Caco-2 (cell line): ENCODE measurements at regions of chr3 and their contacts with region 1.

Region 1: DNA sequence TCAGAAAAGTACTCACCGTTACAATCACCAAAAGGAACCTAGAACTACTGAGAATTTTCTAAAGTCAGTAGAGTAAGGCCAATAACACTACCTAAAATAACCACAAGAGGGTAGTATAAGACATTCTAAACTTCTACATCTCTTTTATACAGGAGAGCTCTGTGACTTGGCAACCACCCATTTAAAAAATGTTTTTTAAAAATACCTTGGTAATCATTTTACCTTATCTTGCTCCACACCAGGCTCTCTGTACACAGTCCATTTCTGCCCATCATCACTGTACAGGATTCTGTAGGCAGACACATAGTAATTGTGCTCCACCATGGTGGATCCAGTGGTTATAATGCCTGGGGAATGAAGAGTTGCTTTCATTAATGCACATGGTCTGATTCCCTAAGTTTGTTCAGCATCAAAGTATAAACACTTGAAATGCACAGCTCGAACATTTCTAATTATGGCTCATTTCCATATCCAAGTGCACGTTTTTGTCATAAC is 54.5 kb downstream of the ST3GAL6 start:
- DNase-seq: peak in 1 of 2 experiments; percentile 22
- H3K4me3 ChIP-seq: no peak overlapping the region
- H3K4me3 Mint-ChIP-seq: no peak overlapping the region
- H3K27ac Mint-ChIP-seq: no peak overlapping the region
- H3K4me1 ChIP-seq: peaks cover 12% of the 10 kb centered on the region
- H3K4me1 Mint-ChIP-seq: peaks cover 13% of the 10 kb centered on the region
- H3K27me3 ChIP-seq: no peaks in the 10 kb centered on the region
- H3K27me3 Mint-ChIP-seq: no peaks in the 10 kb centered on the region
- CTCF ChIP-seq: peak; percentile 42 to 44

Region 2: GRCh38 chr3:98039322-98040024 is 778.1 kb before region 1 on chr3:
- CTCF ChIA-PET with region 1: no interaction called
- POLR2A ChIA-PET with region 1: no interaction called
- intact Hi-C with region 1: loop called (anchors 10 kb)
- DNase-seq: peak; percentile 53 to 70
- H3K4me3 ChIP-seq: 0 out of 2 replicates have a peak overlapping the region, but pooled peaks have one; percentile 20
- H3K4me3 Mint-ChIP-seq: peak overlapping the region; percentile 72
- H3K27ac Mint-ChIP-seq: no peak overlapping the region
- H3K4me1 ChIP-seq: no peaks in the 10 kb centered on the region
- H3K4me1 Mint-ChIP-seq: no peaks in the 10 kb centered on the region
- H3K27me3 ChIP-seq: no peaks in the 10 kb centered on the region
- H3K27me3 Mint-ChIP-seq: peaks cover 3% of the 10 kb centered on the region
- CTCF ChIP-seq: peak; percentile 77 to 92

Region 3: DNA sequence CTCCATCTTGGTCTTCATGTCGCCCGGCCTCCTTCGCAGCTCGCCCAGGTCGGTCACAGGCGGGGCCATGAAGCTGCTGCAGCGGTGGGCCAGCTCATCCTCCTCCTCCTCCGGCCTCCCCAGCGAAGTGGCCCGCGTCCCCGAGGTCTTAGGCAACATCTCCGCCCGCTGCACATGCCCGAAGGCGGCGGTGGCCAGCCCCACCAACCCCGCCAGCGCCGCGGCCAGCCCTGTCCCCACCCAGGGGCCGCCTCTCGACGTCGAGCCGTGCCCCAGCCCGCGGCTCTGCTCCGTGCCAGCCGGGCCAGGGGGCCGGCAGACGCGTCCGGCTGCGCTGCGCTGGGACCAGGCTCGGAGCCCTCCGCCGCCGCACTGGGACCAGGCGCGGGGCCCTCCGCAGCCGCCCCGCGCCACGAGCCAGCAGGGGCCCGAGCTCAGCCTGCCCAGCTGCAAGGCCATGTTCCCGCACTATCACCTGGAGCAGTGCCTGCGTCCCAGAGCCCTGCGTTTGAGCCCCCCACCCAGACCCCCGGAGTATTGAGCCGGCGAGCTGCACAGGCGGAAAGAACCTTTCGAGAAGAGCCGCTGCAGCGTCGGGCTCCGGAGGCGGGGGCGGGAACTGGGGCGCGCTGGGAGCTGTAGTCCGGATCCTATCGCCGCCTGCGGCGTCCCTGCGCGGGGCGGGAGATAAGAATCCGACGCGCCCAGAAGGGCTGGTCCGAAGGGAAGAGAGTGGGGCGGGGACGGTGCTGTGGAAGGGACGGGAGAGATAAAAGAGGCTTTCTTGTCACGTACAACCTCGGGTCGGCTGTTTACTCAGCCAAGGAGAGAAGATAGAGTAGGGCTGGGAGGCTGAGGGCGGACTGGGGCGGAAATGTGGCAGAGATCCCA is 224.3 kb before region 1 on chr3 and contains the start of gene CPOX:
- CTCF ChIA-PET with region 1: interaction called, 4 read pairs
- POLR2A ChIA-PET with region 1: no interaction called
- intact Hi-C with region 1: loop called (anchors 1 kb)
- DNase-seq: peak; percentile 90 to 94
- H3K4me3 ChIP-seq: peak within 1 kb of the TSS; percentile 91
- H3K4me3 Mint-ChIP-seq: peak within 1 kb of the TSS; percentile 97
- H3K27ac Mint-ChIP-seq: peak within 1 kb of the TSS; percentile 55
- H3K4me1 ChIP-seq: peaks cover 13% of the 10 kb centered on the region
- H3K4me1 Mint-ChIP-seq: peaks cover 11% of the 10 kb centered on the region
- H3K27me3 ChIP-seq: no peaks in the 10 kb centered on the region
- H3K27me3 Mint-ChIP-seq: no peaks in the 10 kb centered on the region
- CTCF ChIP-seq: no peak
- total RNA-seq, gene CPOX: 24.2 and 25.0 TPM in 2 replicates

Region 4: GRCh38 chr3:98732286-98733052 is 85.1 kb before region 1 on chr3:
- CTCF ChIA-PET with region 1: interaction called, 8 read pairs
- POLR2A ChIA-PET with region 1: no interaction called
- intact Hi-C with region 1: loop called (anchors 2 kb)
- DNase-seq: peak; percentile 89
- H3K4me3 ChIP-seq: peak overlapping the region; percentile 89
- H3K4me3 Mint-ChIP-seq: peak overlapping the region; percentile 85
- H3K27ac Mint-ChIP-seq: peak overlapping the region; percentile 79
- H3K4me1 ChIP-seq: peaks cover 25% of the 10 kb centered on the region
- H3K4me1 Mint-ChIP-seq: peaks cover 17% of the 10 kb centered on the region
- H3K27me3 ChIP-seq: no peaks in the 10 kb centered on the region
- H3K27me3 Mint-ChIP-seq: no peaks in the 10 kb centered on the region
- CTCF ChIP-seq: no peak

Region 5: DNA sequence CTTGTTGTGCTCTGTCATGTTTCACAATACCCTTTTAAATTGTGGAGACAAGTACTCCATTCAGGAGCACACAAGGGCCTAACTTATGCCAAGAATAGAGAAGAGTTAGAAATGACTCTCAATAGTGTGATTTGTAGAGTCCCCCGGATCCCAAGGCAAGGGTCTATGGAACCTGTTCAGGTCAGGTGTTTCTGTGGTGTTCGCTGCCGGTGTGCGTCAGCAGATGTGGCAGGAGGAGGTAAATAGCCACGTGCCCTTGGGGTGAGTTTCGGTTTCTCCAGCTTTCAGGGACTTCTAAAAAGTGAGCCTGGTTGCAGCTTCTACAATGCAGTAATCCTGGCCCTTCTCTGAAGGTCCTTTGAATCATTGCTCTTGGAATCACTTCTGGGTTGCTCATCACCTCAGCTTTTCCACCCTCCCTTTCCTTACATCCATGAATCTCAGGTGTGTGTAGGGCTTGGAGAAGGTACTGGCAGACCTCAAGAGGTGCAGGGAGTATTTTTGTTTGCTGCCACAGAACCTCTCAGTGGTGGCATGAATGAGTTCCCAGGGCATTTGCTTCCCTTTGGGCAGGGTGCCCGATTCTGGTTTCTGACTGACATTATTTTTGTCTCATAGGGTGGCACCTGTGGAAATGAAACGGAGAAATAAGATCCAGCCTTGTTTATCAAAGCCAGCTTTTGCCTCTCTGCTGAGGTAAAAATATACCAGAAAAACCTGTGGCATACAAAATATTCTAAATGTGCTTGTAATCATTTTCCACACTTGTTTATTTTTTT is 47.1 kb before region 1 on chr3:
- CTCF ChIA-PET with region 1: no interaction called
- POLR2A ChIA-PET with region 1: no interaction called
- intact Hi-C with region 1: no loop called
- DNase-seq: no peak
- H3K4me3 ChIP-seq: no peak overlapping the region
- H3K4me3 Mint-ChIP-seq: no peak overlapping the region
- H3K27ac Mint-ChIP-seq: no peak overlapping the region
- H3K4me1 ChIP-seq: peaks cover 27% of the 10 kb centered on the region
- H3K4me1 Mint-ChIP-seq: peaks cover 8% of the 10 kb centered on the region
- H3K27me3 ChIP-seq: no peaks in the 10 kb centered on the region
- H3K27me3 Mint-ChIP-seq: no peaks in the 10 kb centered on the region
- CTCF ChIP-seq: no peak

Region 6: DNA sequence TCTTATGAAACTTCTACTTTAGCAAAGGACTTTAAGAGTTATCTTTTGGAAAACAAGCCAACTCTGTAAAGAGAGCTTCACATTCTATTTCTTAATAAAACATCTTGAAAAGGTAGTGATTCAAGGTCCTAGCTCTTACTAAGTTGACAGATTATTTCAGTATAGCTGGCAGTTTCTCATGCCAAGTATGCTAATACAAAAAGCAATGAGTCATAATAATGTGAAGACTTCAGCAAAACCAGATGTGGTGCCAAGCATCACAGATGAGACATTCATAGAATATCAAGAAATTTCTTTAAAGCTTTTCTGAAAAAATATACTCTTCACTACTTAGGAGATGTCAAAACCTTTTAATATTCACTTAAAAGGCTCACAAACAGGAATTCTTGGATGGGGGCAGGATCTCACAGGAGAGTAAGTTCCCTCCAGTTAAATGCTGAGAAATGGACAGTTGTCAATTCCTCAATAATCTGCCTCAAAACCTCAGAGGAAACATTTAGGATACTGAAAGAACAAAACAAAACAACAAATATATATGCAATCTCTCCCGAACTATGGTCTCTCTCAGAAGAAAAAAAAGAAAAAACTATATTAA is 38.3 kb after region 1 on chr3:
- CTCF ChIA-PET with region 1: no interaction called
- POLR2A ChIA-PET with region 1: no interaction called
- intact Hi-C with region 1: no loop called
- DNase-seq: no peak
- H3K4me3 ChIP-seq: no peak overlapping the region
- H3K4me3 Mint-ChIP-seq: no peak overlapping the region
- H3K27ac Mint-ChIP-seq: no peak overlapping the region
- H3K4me1 ChIP-seq: no peaks in the 10 kb centered on the region
- H3K4me1 Mint-ChIP-seq: no peaks in the 10 kb centered on the region
- H3K27me3 ChIP-seq: no peaks in the 10 kb centered on the region
- H3K27me3 Mint-ChIP-seq: no peaks in the 10 kb centered on the region
- CTCF ChIP-seq: no peak

Region 7: GRCh38 chr3:98901392-98902350 is 84.1 kb after region 1 on chr3 and contains the start of gene DCBLD2:
- CTCF ChIA-PET with region 1: interaction called, 8 read pairs
- POLR2A ChIA-PET with region 1: interaction called, 3 read pairs
- intact Hi-C with region 1: loop called (anchors 1 kb)
- DNase-seq: peak; percentile 98 to 99
- H3K4me3 ChIP-seq: peak within 1 kb of the TSS; percentile 91
- H3K4me3 Mint-ChIP-seq: peak within 1 kb of the TSS; percentile 96
- H3K27ac Mint-ChIP-seq: peak within 1 kb of the TSS; percentile 81
- H3K4me1 ChIP-seq: peaks cover 17% of the 10 kb centered on the region
- H3K4me1 Mint-ChIP-seq: peaks cover 14% of the 10 kb centered on the region
- H3K27me3 ChIP-seq: no peaks in the 10 kb centered on the region
- H3K27me3 Mint-ChIP-seq: no peaks in the 10 kb centered on the region
- CTCF ChIP-seq: no peak
- total RNA-seq, gene DCBLD2: 53.0 and 58.5 TPM in 2 replicates

Region 8: DNA sequence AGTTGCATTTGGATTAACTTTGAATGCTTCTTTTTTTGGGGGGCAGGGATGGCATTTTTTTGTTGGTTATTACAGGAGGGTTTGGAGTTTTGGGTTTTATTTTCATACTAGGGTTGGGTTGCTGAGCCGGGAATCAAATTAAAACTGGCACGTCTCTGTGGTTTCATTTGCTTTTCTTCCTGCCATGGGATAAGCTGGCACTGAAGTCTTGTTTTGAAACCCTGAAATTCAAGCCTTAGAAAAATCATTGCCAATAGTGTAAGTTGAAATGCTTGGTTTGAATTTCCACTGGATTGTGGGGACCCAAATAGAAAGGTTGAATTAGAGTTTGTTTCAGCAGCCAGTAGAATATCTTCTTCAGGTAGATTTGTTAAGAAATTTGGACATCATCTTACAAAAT is 277.0 kb after region 1 on chr3:
- CTCF ChIA-PET with region 1: no interaction called
- POLR2A ChIA-PET with region 1: no interaction called
- intact Hi-C with region 1: loop called (anchors 10 kb)
- DNase-seq: no peak
- H3K4me3 ChIP-seq: no peak overlapping the region
- H3K4me3 Mint-ChIP-seq: no peak overlapping the region
- H3K27ac Mint-ChIP-seq: no peak overlapping the region
- H3K4me1 ChIP-seq: no peaks in the 10 kb centered on the region
- H3K4me1 Mint-ChIP-seq: no peaks in the 10 kb centered on the region
- H3K27me3 ChIP-seq: no peaks in the 10 kb centered on the region
- H3K27me3 Mint-ChIP-seq: peaks cover 8% of the 10 kb centered on the region
- CTCF ChIP-seq: no peak